ENCODE measurements at regions of chr2 and their contacts with region 1.

Region 1: GRCh38 chr2:38581193-38582147 is 21.3 kb downstream of the HNRNPLL start:
- DNase-seq: peak; percentile 60
- ATAC-seq: peak; percentile 90 to 91
- H3K4me3 ChIP-seq: no peak overlapping the region
- H3K27ac ChIP-seq: no peak overlapping the region
- H3K4me1 ChIP-seq: peaks cover 7% of the 10 kb centered on the region
- H3K27me3 ChIP-seq: no peaks in the 10 kb centered on the region
- CTCF ChIP-seq: peak; percentile 62

Region 2: DNA sequence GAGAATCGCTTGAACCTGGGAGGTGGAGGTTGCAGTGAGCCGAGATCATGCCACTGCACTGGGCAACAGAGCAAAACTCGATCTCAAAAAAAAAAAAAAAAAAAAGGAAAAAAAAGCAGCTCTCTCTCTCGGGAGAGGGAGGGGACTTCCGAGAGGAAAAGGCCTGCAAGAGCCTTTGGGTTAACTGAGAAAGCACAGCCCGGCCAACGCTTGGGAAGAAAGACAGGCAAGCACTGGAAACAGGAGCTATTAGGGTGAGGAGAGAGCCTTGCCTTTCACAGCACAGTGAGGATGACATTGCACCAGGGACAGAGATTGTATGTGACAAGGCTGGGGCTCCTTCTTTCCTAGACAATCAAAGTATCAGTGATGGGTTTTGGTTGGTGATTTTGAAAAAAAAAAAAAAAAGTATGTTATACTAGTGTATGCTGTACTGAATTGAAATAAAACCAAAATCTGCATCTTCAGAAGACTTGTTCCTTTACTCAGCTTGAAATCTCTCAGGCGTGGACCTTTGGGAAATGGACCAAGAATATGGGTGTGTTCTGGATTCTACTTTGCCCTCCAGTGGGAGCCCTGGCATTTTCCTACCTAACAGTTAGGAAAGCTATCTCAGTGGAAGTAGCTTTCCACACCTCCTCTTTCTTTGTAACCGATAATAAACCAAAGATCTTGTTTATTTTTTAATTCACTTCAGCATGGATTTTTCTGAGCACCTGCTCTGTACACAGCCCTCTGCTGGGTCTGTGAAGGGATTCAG is 153.0 kb after region 1 on chr2:
- intact Hi-C with region 1: loop called (anchors 10 kb)
- DNase-seq: no peak
- ATAC-seq: no peak
- H3K4me3 ChIP-seq: no peak overlapping the region
- H3K27ac ChIP-seq: no peak overlapping the region
- H3K4me1 ChIP-seq: peaks cover 29% of the 10 kb centered on the region
- H3K27me3 ChIP-seq: no peaks in the 10 kb centered on the region
- CTCF ChIP-seq: no peak